ENCODE measurements at regions of chr12 and their contacts with region 1.

Region 1: DNA sequence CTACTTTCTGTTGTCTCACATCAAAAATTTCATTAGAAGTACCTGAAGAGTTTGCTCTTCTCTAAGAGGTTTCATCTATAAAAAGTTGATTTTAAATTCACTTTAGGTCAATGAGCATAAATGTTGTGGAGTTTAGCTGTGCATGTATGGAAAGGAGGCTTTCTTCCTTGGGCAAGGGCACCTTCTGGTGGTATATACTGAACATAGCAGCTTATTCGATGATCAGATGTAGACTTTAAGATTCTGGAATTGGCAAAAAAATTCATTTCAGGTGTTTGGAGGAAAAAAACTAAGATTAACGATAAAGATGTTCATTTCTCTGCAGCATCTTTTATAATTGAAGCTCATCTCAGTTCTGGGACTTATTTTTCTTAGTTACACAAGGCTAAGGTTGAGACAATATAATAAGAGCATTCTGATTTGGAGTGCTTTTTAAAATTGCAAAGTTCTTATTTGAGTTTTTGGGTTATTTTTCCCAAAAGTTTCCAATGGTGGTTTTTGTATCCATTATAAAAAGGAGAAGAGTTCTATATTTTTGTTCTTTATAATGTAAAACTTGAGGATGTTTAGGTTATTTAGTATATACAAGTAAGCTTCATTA is 46.8 kb downstream of the TMEM117 start:
- DNase-seq: no peak
- H3K4me3 Mint-ChIP-seq: no peak overlapping the region
- H3K27ac Mint-ChIP-seq: no peak overlapping the region
- H3K4me1 Mint-ChIP-seq: no peaks in the 10 kb centered on the region
- H3K27me3 Mint-ChIP-seq: peaks cover 6% of the 10 kb centered on the region

Region 2: GRCh38 chr12:43501703-43502102 is 381.0 kb before region 1 on chr12:
- intact Hi-C with region 1: loop called (anchors 5 kb)
- DNase-seq: no peak
- H3K4me3 Mint-ChIP-seq: no peak overlapping the region
- H3K27ac Mint-ChIP-seq: no peak overlapping the region
- H3K4me1 Mint-ChIP-seq: no peaks in the 10 kb centered on the region
- H3K27me3 Mint-ChIP-seq: no peaks in the 10 kb centered on the region

Region 3: DNA sequence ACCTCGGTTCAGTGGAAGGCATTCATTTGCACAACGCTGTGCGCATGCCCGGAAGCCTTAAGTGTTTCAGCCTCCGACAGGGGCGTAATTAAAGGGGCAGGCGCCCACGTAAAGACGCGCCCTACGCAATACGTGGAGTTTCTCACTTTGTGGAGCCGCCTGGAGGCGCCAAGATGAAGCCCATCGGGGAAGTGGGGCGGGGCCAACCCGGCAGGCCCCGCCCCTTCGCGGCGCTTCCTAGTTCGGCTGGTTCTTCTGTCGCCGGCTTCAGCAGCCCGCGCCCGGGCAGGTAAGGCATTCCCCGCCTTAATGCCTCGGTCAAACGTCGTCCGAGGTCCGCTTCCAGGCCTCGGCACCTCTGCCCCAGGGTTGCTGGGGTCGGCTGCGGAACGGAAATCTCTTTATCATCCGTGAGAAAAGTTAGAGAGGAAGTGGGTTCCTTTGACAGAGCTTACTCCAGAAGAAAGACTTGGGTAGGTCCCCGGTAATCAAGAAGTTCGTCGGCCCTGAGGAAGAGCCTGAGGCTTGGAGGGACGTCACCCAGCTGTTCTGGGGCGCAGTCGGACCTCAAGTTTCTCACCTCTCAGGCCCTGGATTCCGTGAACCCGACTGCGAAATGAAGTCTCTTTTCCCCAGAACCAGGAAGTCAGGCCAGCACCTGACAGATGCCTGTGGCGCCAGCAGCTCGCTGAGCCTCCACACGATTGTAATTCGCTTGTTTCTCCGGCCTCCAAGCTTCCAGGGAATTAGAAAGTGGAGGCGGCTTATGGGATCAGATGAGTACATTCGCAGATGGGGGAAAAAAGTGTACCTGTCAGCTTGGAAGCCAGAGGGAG is 123.7 kb before region 1 on chr12 and contains the starts of genes IRAK4 and PUS7L:
- intact Hi-C with region 1: loop called (anchors 5 kb)
- DNase-seq: peak; percentile 91
- H3K4me3 Mint-ChIP-seq: peak within 1 kb of the TSS; percentile 98
- H3K27ac Mint-ChIP-seq: peak within 1 kb of the TSS; percentile 98
- H3K4me1 Mint-ChIP-seq: peaks cover 68% of the 10 kb centered on the region
- H3K27me3 Mint-ChIP-seq: no peaks in the 10 kb centered on the region
- total RNA-seq, gene IRAK4: 21.4 and 22.5 TPM in 2 replicates
- total RNA-seq, gene PUS7L: 23.1 and 25.4 TPM in 2 replicates

Region 4: DNA sequence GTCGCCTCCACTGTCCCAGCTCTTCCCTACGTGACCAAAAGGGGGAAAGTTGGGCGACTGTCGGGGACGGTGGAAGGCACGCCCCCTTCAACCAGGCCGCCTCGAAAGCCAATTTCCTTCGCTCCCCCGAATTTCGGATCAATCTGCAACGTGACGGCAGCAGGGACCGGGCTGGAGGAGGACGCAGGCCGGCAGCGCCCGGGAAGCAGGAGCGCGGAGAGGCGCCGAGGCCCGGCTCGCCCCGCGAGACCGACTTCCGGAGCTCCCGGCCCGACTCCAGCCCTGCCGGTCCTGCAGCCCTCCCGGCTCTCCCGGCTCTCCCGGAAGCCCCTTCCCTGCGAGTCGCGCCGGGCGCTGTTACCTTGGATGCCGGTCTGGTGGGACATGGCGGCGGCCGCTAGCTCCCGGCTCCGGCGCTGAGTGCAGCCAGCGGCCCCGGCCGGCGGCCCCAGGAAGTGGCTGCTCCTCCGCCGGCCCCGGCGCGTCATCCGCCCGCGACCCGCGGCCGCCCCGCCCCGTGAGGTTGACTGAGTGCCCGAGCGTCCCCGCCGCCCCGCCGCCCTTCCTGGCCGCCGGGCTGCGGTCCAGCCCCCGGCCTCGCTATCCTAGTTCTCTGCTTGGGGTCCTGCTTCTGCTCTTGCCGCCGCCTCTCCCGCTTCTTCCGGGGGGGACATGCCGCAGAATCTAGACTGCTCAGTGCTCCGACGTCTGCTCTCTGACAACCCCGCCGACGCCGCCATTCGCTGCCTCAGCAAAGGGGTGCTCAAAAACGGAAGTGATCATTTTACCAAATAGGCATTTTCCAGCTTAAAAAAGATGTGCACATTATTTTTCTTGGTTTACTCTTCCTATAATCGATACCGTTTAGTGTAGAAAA is 76.6 kb before region 1 on chr12 and contains the start of gene TWF1:
- intact Hi-C with region 1: loop called (anchors 1 kb)
- DNase-seq: peak; percentile 87
- H3K4me3 Mint-ChIP-seq: peak within 1 kb of the TSS; percentile 96
- H3K27ac Mint-ChIP-seq: peak within 1 kb of the TSS; percentile 100
- H3K4me1 Mint-ChIP-seq: peaks cover 33% of the 10 kb centered on the region
- H3K27me3 Mint-ChIP-seq: peaks cover 2% of the 10 kb centered on the region
- total RNA-seq, gene TWF1: 28.4 and 29.2 TPM in 2 replicates